ENCODE measurements at regions of chr1 and their contacts with region 1.

Region 1: GRCh38 chr1:28877132-28877781 is 37.1 kb upstream of the EPB41 start:
- DNase-seq: peak; percentile 61 to 88 (median 72)
- ATAC-seq: peak; percentile 84
- H3K4me3 ChIP-seq: no peak overlapping the region
- H3K4me3 Mint-ChIP-seq: no peak overlapping the region
- H3K27ac ChIP-seq: no peak overlapping the region
- H3K27ac Mint-ChIP-seq: no peak overlapping the region
- H3K4me1 ChIP-seq: peaks cover 11% of the 10 kb centered on the region
- H3K4me1 Mint-ChIP-seq: peaks cover 7% of the 10 kb centered on the region
- H3K27me3 ChIP-seq: peaks cover 0 to 2% of the 10 kb centered on the region in 2 experiments
- H3K27me3 Mint-ChIP-seq: no peaks in the 10 kb centered on the region
- CTCF ChIP-seq: peak; percentile 97

Region 2: GRCh38 chr1:28088168-28088961 is 788.9 kb before region 1 on chr1 and contains the start of gene EYA3:
- CTCF ChIA-PET with region 1: interaction called, 4 read pairs
- POLR2A ChIA-PET with region 1: no interaction called
- intact Hi-C with region 1: loop called in 1 of 2 experiments (anchors 2 kb)
- DNase-seq: peak; percentile 97 to 100 (median 99)
- ATAC-seq: peak; percentile 92
- H3K4me3 ChIP-seq: peak within 1 kb of the TSS; percentile 81
- H3K4me3 Mint-ChIP-seq: peak within 1 kb of the TSS; percentile 97
- H3K27ac ChIP-seq: peak within 1 kb of the TSS; percentile 69 to 86
- H3K27ac Mint-ChIP-seq: peak within 1 kb of the TSS; percentile 79
- H3K4me1 ChIP-seq: peaks cover 22% of the 10 kb centered on the region
- H3K4me1 Mint-ChIP-seq: peaks cover 42% of the 10 kb centered on the region
- H3K27me3 ChIP-seq: no peaks in the 10 kb centered on the region
- H3K27me3 Mint-ChIP-seq: no peaks in the 10 kb centered on the region
- CTCF ChIP-seq: no peak
- total RNA-seq, gene EYA3: 5.7 to 6.4 TPM

Region 3: GRCh38 chr1:28409090-28409489 is 468.2 kb before region 1 on chr1:
- CTCF ChIA-PET with region 1: interaction called, 10 read pairs
- POLR2A ChIA-PET with region 1: interaction called, 3 read pairs
- intact Hi-C with region 1: loop called (anchors 1 kb)
- DNase-seq: no peak
- ATAC-seq: no peak
- H3K4me3 ChIP-seq: no peak overlapping the region
- H3K4me3 Mint-ChIP-seq: no peak overlapping the region
- H3K27ac ChIP-seq: no peak overlapping the region
- H3K27ac Mint-ChIP-seq: no peak overlapping the region
- H3K4me1 ChIP-seq: peaks cover 4% of the 10 kb centered on the region
- H3K4me1 Mint-ChIP-seq: peaks cover 3% of the 10 kb centered on the region
- H3K27me3 ChIP-seq: no peaks in the 10 kb centered on the region
- H3K27me3 Mint-ChIP-seq: no peaks in the 10 kb centered on the region
- CTCF ChIP-seq: no peak

Region 4: GRCh38 chr1:28775121-28775944 is 101.9 kb before region 1 on chr1:
- CTCF ChIA-PET with region 1: interaction called, 3 read pairs
- POLR2A ChIA-PET with region 1: interaction called, 10 read pairs
- intact Hi-C with region 1: no loop called
- DNase-seq: peak; percentile 39 to 89 (median 66)
- ATAC-seq: peak; percentile 93
- H3K4me3 ChIP-seq: peak overlapping the region; percentile 54
- H3K4me3 Mint-ChIP-seq: peak overlapping the region; percentile 88
- H3K27ac ChIP-seq: peak overlapping the region; percentile 26 to 38
- H3K27ac Mint-ChIP-seq: peak overlapping the region; percentile 90
- H3K4me1 ChIP-seq: peaks cover 14% of the 10 kb centered on the region
- H3K4me1 Mint-ChIP-seq: peaks cover 13% of the 10 kb centered on the region
- H3K27me3 ChIP-seq: no peaks in the 10 kb centered on the region
- H3K27me3 Mint-ChIP-seq: no peaks in the 10 kb centered on the region
- CTCF ChIP-seq: no peak

Region 5: DNA sequence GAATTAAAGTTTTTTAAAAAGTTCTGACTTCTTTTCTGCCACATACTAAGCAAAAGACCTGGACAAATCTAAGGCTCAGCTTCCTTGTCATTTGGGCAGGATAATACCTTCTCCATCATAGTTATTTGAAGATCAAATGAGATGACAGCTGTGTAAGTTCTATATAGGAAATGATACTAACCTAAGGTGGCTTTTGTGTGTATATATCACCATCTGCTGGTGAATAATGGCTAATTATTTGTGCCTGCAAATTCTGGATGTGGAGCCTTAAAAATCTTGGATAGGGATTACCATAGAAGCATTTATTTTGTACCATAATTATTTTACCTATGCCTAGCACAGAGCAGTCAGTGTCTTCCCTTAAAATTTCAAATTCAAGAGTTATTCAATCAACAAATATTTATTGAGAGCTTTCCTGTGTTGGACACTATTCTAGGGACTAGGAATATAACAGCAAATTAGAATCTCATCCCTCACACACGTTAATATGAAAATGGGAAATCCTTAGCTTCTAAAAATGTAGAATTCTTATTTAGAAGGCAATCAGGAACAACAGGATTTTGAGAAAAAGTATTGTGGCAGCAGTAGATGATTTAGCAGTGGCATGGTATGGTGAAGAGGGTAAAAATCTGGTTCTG is 156.7 kb after region 1 on chr1:
- CTCF ChIA-PET with region 1: interaction called, 113 read pairs
- POLR2A ChIA-PET with region 1: interaction called, 6 read pairs
- intact Hi-C with region 1: loop called (anchors 1 kb)
- DNase-seq: peak in 3 of 14 experiments; percentile 56 to 62 (median 60)
- ATAC-seq: peak; percentile 57
- H3K4me3 ChIP-seq: no peak overlapping the region
- H3K4me3 Mint-ChIP-seq: no peak overlapping the region
- H3K27ac ChIP-seq: no peak overlapping the region
- H3K27ac Mint-ChIP-seq: no peak overlapping the region
- H3K4me1 ChIP-seq: no peaks in the 10 kb centered on the region
- H3K4me1 Mint-ChIP-seq: peaks cover 8% of the 10 kb centered on the region
- H3K27me3 ChIP-seq: no peaks in the 10 kb centered on the region
- H3K27me3 Mint-ChIP-seq: no peaks in the 10 kb centered on the region
- CTCF ChIP-seq: peak; percentile 78

Measured in CD4-positive, alpha-beta T cell (primary cell).